ENCODE measurements at regions of chr19 and their contacts with region 1.

Region 1: GRCh38 chr19:19361075-19361594 is 40.5 kb downstream of the MAU2 start:
- DNase-seq: peak; percentile 65
- H3K4me3 Mint-ChIP-seq: no peak overlapping the region
- H3K27ac Mint-ChIP-seq: peak overlapping the region; percentile 52
- H3K4me1 Mint-ChIP-seq: peaks cover 30% of the 10 kb centered on the region
- H3K27me3 Mint-ChIP-seq: no peaks in the 10 kb centered on the region

Region 2: GRCh38 chr19:19185853-19186740 is 175.0 kb before region 1 on chr19:
- intact Hi-C with region 1: loop called (anchors 2 kb)
- DNase-seq: peak; percentile 32
- H3K4me3 Mint-ChIP-seq: no peak overlapping the region
- H3K27ac Mint-ChIP-seq: no peak overlapping the region
- H3K4me1 Mint-ChIP-seq: peaks cover 6% of the 10 kb centered on the region
- H3K27me3 Mint-ChIP-seq: no peaks in the 10 kb centered on the region